BJ (cell line): ENCODE measurements at regions of chr11 and their contacts with region 1.

Region 1: GRCh38 chr11:26043665-26044064 is 288.3 kb upstream of the ANO3 start:
- DNase-seq: no peak
- H3K4me3 ChIP-seq: no peak overlapping the region
- H3K27me3 ChIP-seq: no peaks in the 10 kb centered on the region
- CTCF ChIP-seq: no peak

Region 2: DNA sequence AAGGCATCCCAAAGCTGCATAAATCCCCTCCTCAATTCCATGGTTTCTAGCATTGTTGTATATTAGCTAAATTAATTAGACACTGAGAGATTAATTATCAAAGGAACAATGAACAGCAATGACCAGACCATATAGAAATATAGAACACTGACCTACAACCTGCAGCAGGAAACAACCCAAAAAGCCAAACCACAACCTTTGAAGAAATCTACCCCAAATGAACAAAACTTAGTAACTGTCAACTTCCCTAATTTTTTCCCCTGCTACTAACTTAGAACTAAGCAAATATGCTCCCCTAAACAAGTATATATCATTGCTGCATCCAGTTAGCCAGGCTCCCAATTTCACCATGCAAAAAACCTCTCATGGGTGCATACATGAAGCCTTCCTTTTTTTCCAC is 20.2 kb after region 1 on chr11:
- CTCF ChIA-PET with region 1: interaction called, 5 read pairs
- POLR2A ChIA-PET with region 1: interaction called, 20 read pairs
- DNase-seq: no peak
- H3K4me3 ChIP-seq: no peak overlapping the region
- H3K27me3 ChIP-seq: no peaks in the 10 kb centered on the region
- CTCF ChIP-seq: no peak